ENCODE measurements at regions of chr5 and their contacts with region 1.

Region 1: GRCh38 chr5:149834246-149834855 is 104.2 kb downstream of the PPARGC1B start:
- DNase-seq: peak; percentile 62
- H3K4me3 ChIP-seq: no peak overlapping the region
- H3K27ac ChIP-seq: no peak overlapping the region
- H3K4me1 ChIP-seq: peaks cover 8% of the 10 kb centered on the region
- H3K27me3 ChIP-seq: no peaks in the 10 kb centered on the region
- CTCF ChIP-seq: peak; percentile 75 to 79

Region 2: GRCh38 chr5:149771216-149771980 is 63.0 kb before region 1 on chr5:
- CTCF ChIA-PET with region 1: no interaction called
- dilution Hi-C with region 1: no loop called
- in situ Hi-C with region 1: no loop called
- intact Hi-C with region 1: no loop called
- DNase-seq: no peak
- H3K4me3 ChIP-seq: no peak overlapping the region
- H3K27ac ChIP-seq: no peak overlapping the region
- H3K4me1 ChIP-seq: peaks cover 6% of the 10 kb centered on the region
- H3K27me3 ChIP-seq: no peaks in the 10 kb centered on the region
- CTCF ChIP-seq: no peak

Region 3: DNA sequence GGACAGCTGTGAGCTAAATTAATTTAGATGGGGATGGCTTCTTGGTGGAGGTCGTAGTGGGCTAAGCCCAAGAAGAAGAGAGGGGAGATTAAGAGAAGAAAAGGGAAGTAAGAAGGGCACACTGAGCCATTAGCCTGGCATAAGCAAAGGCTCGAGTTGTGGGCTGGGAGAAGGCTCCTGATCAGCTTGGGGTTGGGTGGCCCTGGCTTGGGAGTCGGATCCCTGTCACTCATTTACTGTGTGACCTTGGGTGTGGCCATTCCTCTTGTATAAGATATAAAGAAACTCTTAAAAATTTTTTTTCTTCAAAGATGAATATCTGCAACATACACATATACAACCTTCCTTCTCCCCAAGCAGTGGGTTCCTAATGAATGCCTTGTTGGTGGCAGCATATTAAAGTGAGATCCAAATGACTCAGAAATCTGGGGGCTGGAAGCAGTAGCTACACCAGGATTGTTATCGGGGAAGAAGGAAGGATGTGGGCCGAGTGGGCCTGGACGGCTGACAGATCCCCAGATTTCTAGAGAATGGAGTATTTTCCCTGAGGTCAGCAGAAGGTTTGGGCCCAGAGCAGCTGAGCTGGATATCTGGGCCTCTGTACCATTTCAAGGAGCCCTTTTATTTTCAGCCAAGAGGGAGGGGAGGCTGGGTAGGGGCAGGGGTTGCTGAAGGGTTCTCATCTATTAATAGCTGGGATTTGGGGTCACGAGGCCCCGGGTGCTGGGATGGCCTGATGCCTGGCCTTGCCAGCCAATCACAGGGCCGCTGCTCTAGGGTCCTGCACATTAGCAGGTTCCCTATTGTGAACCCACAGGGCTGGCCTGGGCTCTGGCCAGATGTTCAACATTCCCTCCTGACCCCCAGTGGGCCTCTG is 52.1 kb before region 1 on chr5:
- CTCF ChIA-PET with region 1: no interaction called
- dilution Hi-C with region 1: no loop called
- in situ Hi-C with region 1: no loop called
- intact Hi-C with region 1: no loop called
- DNase-seq: no peak
- H3K4me3 ChIP-seq: no peak overlapping the region
- H3K27ac ChIP-seq: no peak overlapping the region
- H3K4me1 ChIP-seq: peaks cover 32% of the 10 kb centered on the region
- H3K27me3 ChIP-seq: no peaks in the 10 kb centered on the region
- CTCF ChIP-seq: no peak

Region 4: DNA sequence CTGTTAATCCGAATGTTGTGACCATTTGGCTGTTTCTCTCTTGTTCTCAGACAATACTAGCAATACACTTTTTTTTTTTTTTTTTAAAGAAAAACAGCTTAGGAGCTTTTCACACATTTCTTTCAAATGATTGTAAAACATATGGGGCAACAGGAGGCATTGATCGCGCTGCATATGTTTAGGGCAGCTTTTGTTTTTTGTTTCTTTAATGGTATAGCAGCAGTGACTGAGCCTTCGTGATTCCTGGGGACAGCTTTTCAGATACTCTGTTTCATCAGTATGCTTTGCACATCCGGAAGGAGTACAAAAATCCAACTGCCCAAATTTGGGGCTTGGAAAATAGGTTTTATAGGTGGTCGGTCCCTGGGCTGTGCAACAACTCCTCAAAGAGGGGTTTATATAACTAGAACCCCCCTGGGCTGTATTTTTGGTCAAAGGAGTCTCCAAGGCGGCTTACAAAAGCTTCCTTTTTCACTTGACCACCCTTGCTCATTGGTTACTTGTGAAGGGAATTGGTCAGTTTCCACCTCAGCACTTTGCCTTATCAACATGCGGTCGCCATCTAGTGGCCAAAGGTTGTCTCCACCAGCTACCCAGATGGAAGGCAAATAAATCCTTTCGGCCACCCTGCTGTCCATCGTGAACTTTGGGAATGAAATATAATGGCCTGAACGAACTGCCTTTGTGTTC is 18.4 kb after region 1 on chr5:
- CTCF ChIA-PET with region 1: interaction called, 3 read pairs
- dilution Hi-C with region 1: no loop called
- in situ Hi-C with region 1: no loop called
- intact Hi-C with region 1: loop called (anchors 1 kb)
- DNase-seq: peak; percentile 49
- H3K4me3 ChIP-seq: no peak overlapping the region
- H3K27ac ChIP-seq: no peak overlapping the region
- H3K4me1 ChIP-seq: peaks cover 10% of the 10 kb centered on the region
- H3K27me3 ChIP-seq: no peaks in the 10 kb centered on the region
- CTCF ChIP-seq: peak; percentile 91 to 97

Region 5: GRCh38 chr5:149990518-149991376 is 156.4 kb after region 1 on chr5:
- CTCF ChIA-PET with region 1: interaction called, 6 read pairs
- dilution Hi-C with region 1: no loop called
- in situ Hi-C with region 1: loop called (anchors 5 to 10 kb)
- intact Hi-C with region 1: loop called (anchors 1 kb)
- DNase-seq: peak; percentile 57
- H3K4me3 ChIP-seq: no peak overlapping the region
- H3K27ac ChIP-seq: no peak overlapping the region
- H3K4me1 ChIP-seq: no peaks in the 10 kb centered on the region
- H3K27me3 ChIP-seq: no peaks in the 10 kb centered on the region
- CTCF ChIP-seq: peak; percentile 96 to 97

Region 6: GRCh38 chr5:150122158-150122510 is 287.8 kb after region 1 on chr5:
- CTCF ChIA-PET with region 1: no interaction called
- dilution Hi-C with region 1: no loop called
- in situ Hi-C with region 1: no loop called
- intact Hi-C with region 1: loop called (anchors 2 kb)
- DNase-seq: peak; percentile 23
- H3K4me3 ChIP-seq: no peak overlapping the region
- H3K27ac ChIP-seq: no peak overlapping the region
- H3K4me1 ChIP-seq: peaks cover 7% of the 10 kb centered on the region
- H3K27me3 ChIP-seq: no peaks in the 10 kb centered on the region
- CTCF ChIP-seq: peak; percentile 17 to 51

Region 7: DNA sequence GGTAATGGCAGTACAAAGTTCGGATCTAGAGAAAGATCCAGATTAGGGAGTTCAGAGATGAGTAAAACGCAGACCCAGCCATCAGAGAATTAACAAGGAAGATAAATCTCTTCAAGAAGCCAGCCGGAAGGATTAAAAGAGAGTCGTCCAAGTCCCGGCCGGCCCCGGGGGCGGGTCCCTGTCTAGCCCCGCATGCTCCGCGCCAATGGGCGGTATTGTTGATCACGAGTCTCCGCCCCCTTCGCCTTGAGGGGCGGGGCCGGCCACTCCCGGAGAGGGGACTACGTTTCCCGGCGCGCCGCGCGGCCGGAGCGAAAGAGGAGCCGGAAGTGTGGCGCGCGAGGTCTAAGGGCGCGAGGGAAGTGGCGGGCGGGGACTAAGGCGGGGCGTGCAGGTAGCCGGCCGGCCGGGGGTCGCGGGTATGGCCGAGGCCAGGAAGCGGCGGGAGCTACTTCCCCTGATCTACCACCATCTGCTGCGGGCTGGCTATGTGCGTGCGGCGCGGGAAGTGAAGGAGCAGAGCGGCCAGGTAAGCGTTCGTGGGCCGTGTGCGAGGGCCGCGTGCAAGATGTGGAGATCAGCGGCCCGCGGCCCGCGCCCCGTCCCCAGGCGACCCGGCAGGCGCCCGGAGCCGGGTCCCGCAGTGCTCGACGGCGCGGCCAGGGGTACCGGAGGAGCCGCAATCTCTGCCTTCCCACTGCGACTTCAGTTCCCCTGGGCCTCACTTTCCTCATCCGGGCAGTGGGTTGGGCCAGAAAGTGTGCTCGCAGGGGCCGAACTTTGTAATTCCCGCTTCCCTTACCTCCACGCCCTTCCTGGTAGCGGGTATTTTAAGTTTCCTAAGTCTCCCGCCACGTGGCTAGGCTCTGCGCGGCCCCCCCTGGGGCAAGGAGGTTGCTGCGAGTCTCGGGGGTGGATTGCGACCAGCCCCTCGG is 523.2 kb after region 1 on chr5 and contains the start of gene TCOF1:
- CTCF ChIA-PET with region 1: no interaction called
- dilution Hi-C with region 1: no loop called
- in situ Hi-C with region 1: no loop called
- intact Hi-C with region 1: loop called (anchors 10 kb)
- DNase-seq: peak; percentile 96
- H3K4me3 ChIP-seq: peak within 1 kb of the TSS; percentile 83 to 88 (median 85)
- H3K27ac ChIP-seq: peak within 1 kb of the TSS; percentile 83
- H3K4me1 ChIP-seq: peaks cover 9% of the 10 kb centered on the region
- H3K27me3 ChIP-seq: no peaks in the 10 kb centered on the region
- CTCF ChIP-seq: no peak
- total RNA-seq, gene TCOF1: 17.7 to 70.4 TPM

Measured in mammary epithelial cell (primary cell).